Aorta (tissue), 5 donors: ENCODE measurements at regions of chr6 and their contacts with region 1.

Region 1: GRCh38 chr6:21317642-21318041 is 275.9 kb upstream of the SOX4 start:
- DNase-seq: no peak
- ATAC-seq: no peak
- H3K4me3 ChIP-seq: no peak overlapping the region
- H3K27ac ChIP-seq: no peak overlapping the region
- H3K4me1 ChIP-seq: no peaks in the 10 kb centered on the region
- H3K27me3 ChIP-seq: no peaks in the 10 kb centered on the region

Region 2: DNA sequence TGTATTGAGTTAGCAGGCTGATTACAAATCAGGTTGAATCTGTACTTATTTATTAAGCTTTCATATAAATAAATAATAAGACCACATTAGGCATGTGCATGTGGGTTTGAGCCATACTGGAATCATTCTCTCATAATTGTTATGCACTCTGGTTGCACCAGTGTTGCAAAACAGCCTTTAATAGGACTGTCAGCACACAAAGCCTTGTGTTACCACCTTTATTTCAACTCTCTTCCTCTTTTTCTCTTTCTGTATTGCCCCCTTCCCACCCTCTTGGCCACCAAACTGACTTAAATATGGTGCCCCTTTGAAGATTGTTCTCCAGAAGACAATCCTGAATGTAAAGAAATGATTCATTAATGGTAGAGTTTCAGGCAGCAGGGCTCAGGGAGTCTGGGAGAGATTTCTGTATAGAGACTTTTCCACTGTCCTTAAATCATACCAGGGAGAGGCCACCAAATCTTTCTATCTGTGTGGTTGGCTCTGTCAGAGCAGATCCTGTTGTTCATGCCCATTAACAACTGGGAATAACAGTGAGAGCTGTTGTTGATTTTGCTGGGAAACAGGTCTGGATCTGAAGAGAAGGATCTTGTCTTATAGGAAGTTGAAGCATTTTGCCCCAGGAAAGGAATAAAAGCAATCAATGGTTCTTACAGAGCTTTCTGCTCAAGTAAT is 144.3 kb after region 1 on chr6:
- intact Hi-C with region 1: loop called in 1 of 2 experiments (anchors 5 kb)
- DNase-seq: no peak
- ATAC-seq: no peak
- H3K4me3 ChIP-seq: no peak overlapping the region
- H3K27ac ChIP-seq: no peak overlapping the region
- H3K4me1 ChIP-seq: no peaks in the 10 kb centered on the region
- H3K27me3 ChIP-seq: no peaks in the 10 kb centered on the region